HEK293 (cell line): ENCODE measurements at regions of chr15 and their contacts with region 1.

Region 1: DNA sequence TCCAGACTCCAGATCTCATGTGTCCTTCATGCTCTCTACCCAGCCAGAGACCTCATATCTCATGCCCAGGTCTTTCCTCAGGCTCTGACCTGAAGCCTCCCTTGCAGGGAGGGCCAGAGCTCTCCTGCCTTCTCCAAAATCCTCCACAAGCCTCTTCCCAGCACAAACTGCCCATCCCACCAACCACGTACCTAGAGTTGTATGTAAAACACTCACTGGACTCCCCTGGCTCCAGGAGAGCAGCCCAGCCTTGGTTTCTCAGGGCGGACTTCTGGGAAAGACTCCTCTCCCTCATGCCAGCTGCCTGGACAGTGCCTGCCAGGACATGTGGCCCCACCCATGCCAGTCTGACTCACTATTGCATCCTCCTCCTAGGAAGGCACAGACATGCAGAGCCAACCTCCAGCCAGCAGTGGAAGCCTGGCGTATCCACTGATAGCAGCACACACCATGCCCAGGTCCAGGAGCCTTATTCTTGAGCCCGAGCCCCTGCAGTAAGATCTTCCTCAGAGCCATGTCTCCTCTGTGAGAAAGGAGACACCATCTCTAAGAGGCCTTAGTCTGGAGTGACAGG is 8.6 kb downstream of the PKM start:
- H3K4me3 ChIP-seq: no peak overlapping the region
- H3K27ac ChIP-seq: 0 out of 2 replicates have a peak overlapping the region, but pooled peaks have one; percentile 21
- H3K4me1 ChIP-seq: peaks cover 29% of the 10 kb centered on the region; the same call in 1 of the 2 replicates
- CTCF ChIP-seq: no peak

Region 2: GRCh38 chr15:72184165-72184889 is 38.0 kb before region 1 on chr15:
- CTCF ChIA-PET with region 1: interaction called, 10 read pairs
- POLR2A ChIA-PET with region 1: interaction called, 5 read pairs
- H3K4me3 ChIP-seq: peak overlapping the region; percentile 9
- H3K27ac ChIP-seq: peak overlapping the region; percentile 31; the same call in 1 of the 2 replicates
- H3K4me1 ChIP-seq: peaks cover 6% of the 10 kb centered on the region; the same call in 1 of the 2 replicates
- CTCF ChIP-seq: no peak